PC-3 (cell line): ENCODE measurements at regions of chr4 and their contacts with region 1.

Region 1: GRCh38 chr4:25993395-25994185 is 79.6 kb downstream of the SMIM20 start:
- DNase-seq: peak; percentile 13
- ATAC-seq: no peak
- H3K4me3 ChIP-seq: no peak overlapping the region
- H3K27ac ChIP-seq: no peak overlapping the region
- H3K4me1 ChIP-seq: no peaks in the 10 kb centered on the region
- H3K27me3 ChIP-seq: no peaks in the 10 kb centered on the region
- CTCF ChIP-seq: peak; percentile 42; the same call in 1 of the 2 replicates

Region 2: DNA sequence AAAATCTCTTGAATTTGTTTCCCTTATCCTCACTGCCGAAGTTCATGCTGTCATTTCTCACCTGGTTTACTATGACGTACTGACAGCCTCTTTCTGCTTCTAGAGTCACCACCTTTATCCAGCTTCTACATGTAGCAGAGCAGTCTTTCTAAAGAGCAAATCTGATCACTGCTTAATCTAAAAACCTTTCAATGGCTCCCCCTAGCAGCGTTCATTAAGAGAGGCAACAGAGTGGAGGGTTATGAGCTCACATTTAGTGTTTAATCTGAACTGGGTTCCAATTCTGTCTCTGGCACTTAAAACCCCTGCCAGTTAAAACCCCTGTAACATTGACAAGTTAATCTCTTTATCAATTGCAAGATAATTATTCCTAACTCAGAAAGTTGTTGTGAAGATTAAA is 331.6 kb after region 1 on chr4:
- CTCF ChIA-PET with region 1: no interaction called
- POLR2A ChIA-PET with region 1: no interaction called
- intact Hi-C with region 1: loop called (anchors 2 kb)
- DNase-seq: peak; percentile 50
- ATAC-seq: peak; percentile 22
- H3K4me3 ChIP-seq: no peak overlapping the region
- H3K27ac ChIP-seq: no peak overlapping the region
- H3K4me1 ChIP-seq: peaks cover 36% of the 10 kb centered on the region
- H3K27me3 ChIP-seq: no peaks in the 10 kb centered on the region
- CTCF ChIP-seq: peak; percentile 72